Activated CD4-positive, alpha-beta T cell treated with anti-CD3 and anti-CD28 coated beads for 36 hours (primary cell): ENCODE measurements at regions of chrX and their contacts with region 1.

Region 1: GRCh38 chrX:115616943-115617563 is 56.1 kb downstream of the PLS3 start:
- DNase-seq: peak; percentile 15
- ATAC-seq: peak; percentile 91
- H3K4me3 Mint-ChIP-seq: no peak overlapping the region
- H3K27ac Mint-ChIP-seq: peak overlapping the region; percentile 39
- H3K4me1 Mint-ChIP-seq: peaks cover 9% of the 10 kb centered on the region
- H3K27me3 Mint-ChIP-seq: peaks cover 3% of the 10 kb centered on the region

Region 2: GRCh38 chrX:115579327-115579726 is 37.7 kb before region 1 on chrX:
- CTCF ChIA-PET with region 1: no interaction called
- POLR2A ChIA-PET with region 1: no interaction called
- intact Hi-C with region 1: loop called (anchors 1 to 5 kb)
- DNase-seq: peak; percentile 10
- ATAC-seq: peak; percentile 84
- H3K4me3 Mint-ChIP-seq: no peak overlapping the region
- H3K27ac Mint-ChIP-seq: no peak overlapping the region
- H3K4me1 Mint-ChIP-seq: peaks cover 23% of the 10 kb centered on the region
- H3K27me3 Mint-ChIP-seq: no peaks in the 10 kb centered on the region

Region 3: DNA sequence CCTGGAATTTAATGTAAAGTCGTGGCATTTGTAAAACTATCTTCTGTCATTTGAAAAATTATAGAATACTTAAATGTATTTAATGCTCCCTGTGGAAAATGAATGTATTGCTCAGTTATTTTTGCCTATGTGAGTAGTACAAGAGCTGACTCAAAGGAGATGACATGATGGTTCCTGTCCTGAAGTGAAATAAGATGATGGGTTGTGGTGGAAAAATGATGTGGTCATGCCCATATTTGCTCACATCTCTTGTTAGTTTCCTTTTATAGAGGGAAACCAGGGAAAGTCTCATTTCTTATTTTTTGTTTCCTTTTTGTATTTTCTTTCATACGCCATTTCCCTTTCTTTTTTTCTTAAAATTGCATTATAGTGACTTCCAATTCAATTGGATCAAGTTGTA is 32.4 kb before region 1 on chrX:
- CTCF ChIA-PET with region 1: no interaction called
- POLR2A ChIA-PET with region 1: no interaction called
- intact Hi-C with region 1: loop called (anchors 1 to 5 kb)
- DNase-seq: peak; percentile 7
- ATAC-seq: peak; percentile 80
- H3K4me3 Mint-ChIP-seq: no peak overlapping the region
- H3K27ac Mint-ChIP-seq: peak overlapping the region; percentile 42
- H3K4me1 Mint-ChIP-seq: peaks cover 21% of the 10 kb centered on the region
- H3K27me3 Mint-ChIP-seq: no peaks in the 10 kb centered on the region